Activated CD4-positive, alpha-beta memory T cell treated with anti-CD3 and anti-CD28 coated beads, Interleukin-2, amount 10 ng/mL, durations not matched to agents 7 days and 5 days (primary cell): ENCODE measurements at regions of chr1 and their contacts with region 1.

Region 1: GRCh38 chr1:40979233-40980067 is at the start of gene CTPS1:
- DNase-seq: peak; percentile 96
- H3K4me3 Mint-ChIP-seq: peak within 1 kb of the TSS; percentile 82
- H3K27ac Mint-ChIP-seq: peak within 1 kb of the TSS; percentile 87
- H3K4me1 Mint-ChIP-seq: peaks cover 40% of the 10 kb centered on the region
- H3K27me3 Mint-ChIP-seq: peaks cover 1% of the 10 kb centered on the region
- total RNA-seq, gene CTPS1: 41.7 to 42.2 TPM

Region 2: DNA sequence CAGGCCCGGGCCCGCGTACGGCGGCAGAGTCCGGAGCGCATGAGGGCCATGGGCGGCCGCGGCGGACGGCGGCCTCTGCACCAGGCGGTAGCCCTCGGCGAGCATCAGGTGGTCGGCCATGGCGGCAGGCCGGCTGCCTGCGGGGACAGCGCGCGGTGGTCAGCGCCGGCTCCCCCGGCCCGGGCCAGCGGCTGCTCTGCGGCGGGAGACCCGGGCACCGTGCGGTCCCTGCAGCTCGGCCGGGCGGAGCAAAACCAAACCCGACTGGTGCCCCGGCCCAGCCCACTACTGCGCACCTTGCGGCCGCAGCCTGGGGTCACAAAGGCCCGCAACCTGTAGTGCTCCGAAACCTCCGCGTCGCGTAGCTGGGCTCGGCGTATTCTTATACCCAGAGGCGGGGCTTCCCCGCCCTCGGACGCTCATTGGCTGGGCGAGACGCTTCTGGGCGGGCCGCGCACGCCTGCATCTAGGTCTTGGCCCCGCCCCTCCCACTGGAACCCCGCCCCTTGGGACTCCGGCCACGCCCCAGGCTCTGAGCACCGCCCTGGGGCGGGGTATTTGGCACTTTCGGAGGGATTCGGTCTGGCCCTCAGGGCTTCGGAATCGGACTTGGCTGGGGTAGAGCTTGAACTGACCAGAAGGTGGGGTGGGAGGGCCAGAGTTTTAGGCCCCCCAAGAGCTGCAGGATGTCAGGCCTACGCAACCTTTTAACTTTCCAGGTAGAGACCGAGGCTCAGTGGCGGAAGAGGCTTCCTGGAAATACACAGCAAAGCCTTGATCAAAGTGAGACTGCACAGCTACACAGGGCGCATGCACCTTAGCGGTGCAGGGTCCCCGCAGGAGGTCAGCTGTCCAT is 117.2 kb before region 1 on chr1 and contains the start of gene CITED4:
- CTCF ChIA-PET with region 1: no interaction called
- POLR2A ChIA-PET with region 1: interaction called, 45 read pairs
- DNase-seq: peak; percentile 96
- H3K4me3 Mint-ChIP-seq: peak within 1 kb of the TSS; percentile 82
- H3K27ac Mint-ChIP-seq: peak within 1 kb of the TSS; percentile 95
- H3K4me1 Mint-ChIP-seq: peaks cover 33% of the 10 kb centered on the region
- H3K27me3 Mint-ChIP-seq: peaks cover 31% of the 10 kb centered on the region
- total RNA-seq, gene CITED4: 6.9 to 7.9 TPM

Region 3: DNA sequence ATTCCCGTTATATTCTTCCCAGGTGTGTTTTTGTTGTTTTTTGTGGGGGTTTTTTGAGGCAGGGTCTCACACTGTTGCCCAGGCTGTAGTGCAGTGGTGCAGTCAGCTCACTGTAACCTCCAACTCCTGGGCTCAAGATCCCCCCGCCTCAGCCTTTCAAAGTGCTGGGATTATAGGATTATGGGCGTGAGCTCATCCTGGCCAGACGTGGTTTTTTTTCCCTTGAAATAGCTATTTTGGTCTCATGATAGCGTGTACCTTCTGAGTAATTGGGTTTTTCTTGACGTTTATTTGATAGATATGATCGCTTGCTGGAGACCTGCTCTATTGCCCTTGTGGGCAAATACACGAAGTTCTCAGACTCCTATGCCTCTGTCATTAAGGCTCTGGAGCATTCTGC is 17.6 kb after region 1 on chr1:
- CTCF ChIA-PET with region 1: interaction called, 4 read pairs
- POLR2A ChIA-PET with region 1: interaction called, 44 read pairs
- DNase-seq: no peak
- H3K4me3 Mint-ChIP-seq: no peak overlapping the region
- H3K27ac Mint-ChIP-seq: no peak overlapping the region
- H3K4me1 Mint-ChIP-seq: peaks cover 5% of the 10 kb centered on the region
- H3K27me3 Mint-ChIP-seq: no peaks in the 10 kb centered on the region

Region 4: GRCh38 chr1:41003640-41004220 is 24.3 kb after region 1 on chr1:
- CTCF ChIA-PET with region 1: interaction called, 17 read pairs
- POLR2A ChIA-PET with region 1: interaction called, 44 read pairs
- DNase-seq: peak; percentile 88
- H3K4me3 Mint-ChIP-seq: no peak overlapping the region
- H3K27ac Mint-ChIP-seq: peak overlapping the region; percentile 55
- H3K4me1 Mint-ChIP-seq: peaks cover 27% of the 10 kb centered on the region
- H3K27me3 Mint-ChIP-seq: no peaks in the 10 kb centered on the region

Region 5: DNA sequence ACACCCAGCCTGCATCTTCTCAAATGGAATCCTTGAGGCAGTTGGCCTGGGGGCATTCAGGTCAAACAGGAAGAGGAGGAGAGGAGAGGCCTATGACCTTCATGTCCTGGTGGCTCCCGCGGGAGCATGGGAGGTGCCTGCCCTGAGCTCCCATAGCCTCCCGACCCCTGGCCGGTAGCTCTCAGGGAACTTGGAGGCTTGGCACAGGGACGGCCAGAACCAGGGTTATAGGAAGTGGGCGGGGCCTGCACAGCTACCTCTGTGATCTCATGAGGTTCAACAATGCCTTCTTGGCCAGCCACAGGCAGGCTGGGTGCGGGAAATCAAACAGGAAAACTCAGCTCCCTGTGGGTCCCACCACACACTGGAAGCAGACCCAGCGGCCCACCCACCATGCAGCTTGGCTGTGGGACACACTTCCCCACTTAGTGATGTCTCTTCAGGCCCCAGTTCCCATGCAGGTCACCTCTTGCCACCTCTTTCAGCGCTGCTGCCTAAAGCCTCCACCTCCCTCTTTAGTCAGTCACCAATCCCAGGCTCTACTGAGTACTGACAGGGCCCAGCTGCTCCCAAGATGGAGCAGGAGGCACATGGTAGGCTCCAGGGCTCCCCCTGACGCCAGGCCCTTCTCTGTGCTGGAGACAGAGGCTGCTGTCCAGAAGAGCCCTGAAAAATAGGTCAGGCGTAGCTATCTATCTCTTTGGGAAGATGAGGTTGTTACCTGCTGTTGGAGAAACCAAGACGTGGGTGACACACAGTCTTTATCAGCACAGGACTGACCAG is 42.3 kb after region 1 on chr1 and contains the start of gene SLFNL1:
- CTCF ChIA-PET with region 1: no interaction called
- POLR2A ChIA-PET with region 1: interaction called, 10 read pairs
- DNase-seq: no peak
- H3K4me3 Mint-ChIP-seq: no peak within 1 kb of the TSS
- H3K27ac Mint-ChIP-seq: no peak within 1 kb of the TSS
- H3K4me1 Mint-ChIP-seq: peaks cover 11% of the 10 kb centered on the region
- H3K27me3 Mint-ChIP-seq: no peaks in the 10 kb centered on the region
- total RNA-seq, gene SLFNL1: 0.18 to 0.33 TPM